Sigmoid colon (tissue), 7 donors: ENCODE measurements at regions of chr13 and their contacts with region 1.

Region 1: GRCh38 chr13:51583875-51584730 is at the start of gene WDFY2:
- DNase-seq: peak; percentile 100
- H3K4me3 ChIP-seq: peak within 1 kb of the TSS; percentile 80 to 91 (median 84)
- H3K27ac ChIP-seq: peak within 1 kb of the TSS; percentile 93 to 98 (median 94)
- H3K4me1 ChIP-seq: peaks cover 0 to 25% (median 20%) of the 10 kb centered on the region in 4 donors
- H3K27me3 ChIP-seq: no peaks in the 10 kb centered on the region
- CTCF ChIP-seq: no peak
- EP300 ChIP-seq: peak in 1 of 4 donors; percentile 56
- POLR2A ChIP-seq: peak; percentile 59 to 76
- total RNA-seq, gene WDFY2: 7.3 to 18.3 (median 9.9) TPM

Region 2: DNA sequence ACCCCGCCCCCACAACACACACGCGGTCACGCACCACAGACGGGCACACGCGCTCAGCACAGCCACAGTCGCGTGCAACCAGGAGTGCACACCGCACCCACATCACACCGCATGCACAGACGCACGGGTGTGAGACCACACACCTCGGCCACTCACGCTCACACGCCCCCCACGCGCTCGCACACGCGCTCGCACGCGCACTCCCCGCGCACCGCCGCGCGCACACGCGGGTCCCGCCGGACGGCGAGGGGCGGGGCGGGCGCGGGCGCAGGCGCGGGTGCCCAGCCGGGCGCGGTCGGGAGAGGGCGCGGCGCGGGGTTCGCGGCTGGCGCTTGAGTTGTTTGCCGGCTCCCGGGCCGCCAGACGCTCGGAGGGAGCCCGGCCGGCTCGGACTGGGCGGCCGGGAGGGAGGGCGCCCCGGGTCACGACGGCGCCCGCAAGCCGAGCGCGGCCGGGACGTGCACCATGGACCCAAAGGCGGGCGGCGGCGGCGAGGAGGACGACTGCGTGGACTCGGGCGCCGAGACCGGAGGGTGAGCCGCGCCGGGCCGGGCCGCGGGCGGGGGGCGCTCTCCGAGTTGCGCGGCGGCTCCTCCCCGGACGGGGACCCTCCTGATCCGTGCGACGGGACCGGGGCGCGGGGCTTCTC is 361.9 kb before region 1 on chr13 and contains the start of gene FAM124A:
- intact Hi-C with region 1: loop called (anchors 5 kb)
- DNase-seq: peak; percentile 75
- H3K4me3 ChIP-seq: peak within 1 kb of the TSS; percentile 71 to 97 (median 92)
- H3K27ac ChIP-seq: peak within 1 kb of the TSS; percentile 77 to 93 (median 88)
- H3K4me1 ChIP-seq: peaks cover 0 to 44% (median 35%) of the 10 kb centered on the region in 4 donors
- H3K27me3 ChIP-seq: no peaks in the 10 kb centered on the region
- CTCF ChIP-seq: no peak
- EP300 ChIP-seq: no peak
- POLR2A ChIP-seq: no peak
- total RNA-seq, gene FAM124A: 11.7 to 18.3 (median 16.3) TPM

Region 3: DNA sequence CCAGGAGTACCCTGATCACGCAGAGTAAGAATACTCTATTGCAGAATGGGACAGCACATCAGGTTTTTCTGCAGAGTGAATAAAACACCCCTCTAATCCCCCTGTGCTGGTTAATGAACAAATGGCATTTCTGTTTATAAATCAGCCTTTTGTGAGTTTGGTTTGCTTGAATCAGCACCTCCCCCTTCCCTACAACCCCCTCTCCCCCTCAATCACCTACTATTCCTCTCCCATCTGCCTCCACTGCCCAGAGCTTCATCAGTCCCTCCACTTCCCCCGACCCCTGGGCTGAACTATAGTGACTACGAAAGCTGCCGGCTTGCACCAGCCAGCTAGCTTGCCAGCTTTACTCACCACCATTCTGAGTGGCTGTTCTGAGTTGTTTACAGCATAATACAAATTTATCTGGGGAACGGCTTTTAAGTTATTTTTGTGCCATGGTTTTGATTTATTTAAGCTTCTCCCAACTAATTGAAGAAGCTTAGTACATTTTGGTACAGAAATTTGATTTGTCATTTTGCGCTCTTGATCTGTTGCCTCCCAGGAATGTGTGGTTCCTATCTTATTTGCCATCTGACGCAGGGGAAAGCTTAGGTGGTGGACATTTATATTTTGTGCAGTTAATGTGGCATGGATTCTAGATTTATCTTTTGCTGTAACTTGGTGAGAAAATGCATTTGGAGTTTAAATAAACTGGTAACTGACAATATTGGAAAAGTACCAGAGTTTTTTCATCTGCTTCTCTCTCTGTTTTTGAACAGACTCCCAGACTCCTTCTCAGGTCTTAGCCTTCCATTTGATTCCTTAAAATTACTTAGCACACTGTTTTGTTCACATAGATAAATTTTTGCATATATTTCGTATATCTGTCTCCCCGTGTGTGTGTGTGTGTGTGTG is 41.5 kb before region 1 on chr13:
- intact Hi-C with region 1: loop called (anchors 2 kb)
- DNase-seq: no peak
- H3K4me3 ChIP-seq: peak overlapping the region in 2 of 4 donors; percentile 10 to 18
- H3K27ac ChIP-seq: peak overlapping the region; percentile 35 to 70 (median 66)
- H3K4me1 ChIP-seq: peaks cover 0 to 54% (median 47%) of the 10 kb centered on the region in 4 donors
- H3K27me3 ChIP-seq: no peaks in the 10 kb centered on the region
- CTCF ChIP-seq: no peak
- EP300 ChIP-seq: no peak
- POLR2A ChIP-seq: no peak

Region 4: GRCh38 chr13:51714663-51715168 is 130.6 kb after region 1 on chr13:
- intact Hi-C with region 1: no loop called
- DNase-seq: no peak
- H3K4me3 ChIP-seq: no peak overlapping the region
- H3K27ac ChIP-seq: no peak overlapping the region
- H3K4me1 ChIP-seq: no peaks in the 10 kb centered on the region
- H3K27me3 ChIP-seq: no peaks in the 10 kb centered on the region
- CTCF ChIP-seq: no peak
- EP300 ChIP-seq: no peak
- POLR2A ChIP-seq: no peak

Region 5: DNA sequence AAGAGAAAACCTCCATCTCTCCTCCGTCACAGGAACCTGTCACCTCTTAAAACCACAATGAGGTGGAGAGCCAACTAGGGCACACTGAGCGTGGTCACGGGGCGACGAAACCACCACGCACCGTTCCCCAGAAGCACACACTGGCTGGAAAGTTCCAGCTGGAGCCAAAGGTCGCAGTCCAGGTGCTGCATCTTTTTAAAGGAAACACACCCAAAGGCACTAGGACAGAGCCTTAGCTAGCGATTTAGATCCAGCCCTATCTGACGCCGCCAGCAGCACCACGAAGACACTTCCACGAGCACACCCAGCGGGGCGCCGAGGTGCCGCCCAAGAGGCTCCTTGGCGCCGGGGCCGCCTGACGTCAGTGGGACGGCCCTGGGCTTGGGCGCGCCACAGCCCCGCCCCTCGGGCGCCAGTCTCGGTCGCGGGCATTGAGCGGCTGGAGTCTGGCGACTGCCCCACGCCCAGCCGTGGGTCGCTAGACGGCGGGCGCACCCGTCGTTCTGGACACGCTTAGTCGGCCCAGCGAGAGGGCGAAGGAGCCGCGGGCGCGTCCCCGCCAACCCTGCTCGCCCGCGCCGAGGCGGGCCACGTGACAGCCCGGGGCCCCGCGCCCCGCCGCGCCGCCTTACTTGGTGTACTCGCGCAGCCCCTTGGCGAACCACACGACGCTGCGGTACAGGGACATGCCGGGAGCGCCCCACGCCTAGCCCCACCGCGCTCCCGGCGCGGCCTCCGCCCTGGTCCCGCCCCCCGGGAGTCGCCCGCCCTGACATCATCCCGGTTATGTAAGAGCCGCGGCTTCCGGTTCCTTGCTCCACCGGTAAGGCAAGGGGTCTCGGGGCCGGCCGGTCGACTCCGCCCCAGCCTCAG is 219.6 kb after region 1 on chr13 and contains the start of gene DHRS12:
- intact Hi-C with region 1: loop called (anchors 2 kb)
- DNase-seq: peak; percentile 97
- H3K4me3 ChIP-seq: peak within 1 kb of the TSS; percentile 52 to 83 (median 67)
- H3K27ac ChIP-seq: peak within 1 kb of the TSS; percentile 91 to 99 (median 97)
- H3K4me1 ChIP-seq: peaks cover 0 to 54% (median 45%) of the 10 kb centered on the region in 4 donors
- H3K27me3 ChIP-seq: no peaks in the 10 kb centered on the region
- CTCF ChIP-seq: no peak
- EP300 ChIP-seq: peak in 2 of 4 donors; percentile 31 to 45
- POLR2A ChIP-seq: peak; percentile 83 to 86
- total RNA-seq, gene DHRS12: 11.4 to 26.9 (median 14.9) TPM

Region 6: DNA sequence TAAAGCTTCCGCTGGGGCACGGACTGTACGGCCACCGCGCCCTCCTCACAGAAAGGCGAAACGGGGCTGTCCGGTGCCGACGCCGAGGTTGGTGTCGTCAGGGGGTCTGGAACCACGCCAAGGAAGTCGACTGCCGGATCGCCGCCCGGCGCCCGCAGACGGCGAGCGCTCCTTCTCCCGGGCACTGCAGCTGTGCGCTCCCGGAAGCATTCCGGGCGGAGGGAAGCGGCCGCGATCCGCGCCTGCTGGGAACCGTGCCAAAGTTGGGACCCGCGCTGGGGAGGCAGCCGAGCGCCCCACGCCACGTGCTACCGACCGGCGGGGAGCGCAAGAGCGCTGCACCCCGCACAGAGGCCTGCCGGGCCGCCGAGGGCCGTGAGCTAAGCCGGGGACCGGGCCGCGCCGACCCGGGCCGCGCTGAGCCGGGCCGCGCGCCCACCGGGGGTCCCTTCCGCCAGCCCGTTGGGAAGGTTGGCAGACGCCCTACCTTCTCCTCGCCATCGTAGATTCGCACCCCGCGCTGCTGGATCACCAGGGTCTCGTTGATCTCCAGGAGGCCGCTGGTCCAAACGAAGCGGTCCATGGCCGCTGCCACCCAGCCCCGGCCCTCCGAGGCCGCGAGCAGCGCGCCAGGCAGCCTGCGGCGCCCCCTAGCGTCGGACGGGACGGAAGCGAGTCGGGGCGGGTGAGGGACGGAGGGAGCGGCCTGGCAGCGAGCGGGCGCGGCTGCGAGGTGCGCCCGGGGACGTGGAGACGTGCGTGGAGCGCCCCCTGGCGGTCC is 866.1 kb after region 1 on chr13 and contains the start of gene VPS36:
- intact Hi-C with region 1: loop called (anchors 5 kb)
- DNase-seq: peak; percentile 97
- H3K4me3 ChIP-seq: peak within 1 kb of the TSS; percentile 57 to 88 (median 84)
- H3K27ac ChIP-seq: peak within 1 kb of the TSS; percentile 90 to 99 (median 96)
- H3K4me1 ChIP-seq: peaks cover 0 to 40% (median 37%) of the 10 kb centered on the region in 4 donors
- H3K27me3 ChIP-seq: no peaks in the 10 kb centered on the region
- CTCF ChIP-seq: peak in 3 of 4 experiments; percentile 90 to 100 (median 95)
- EP300 ChIP-seq: no peak
- POLR2A ChIP-seq: peak; percentile 59 to 77
- total RNA-seq, gene VPS36: 52.8 to 85.0 (median 66.4) TPM